CD4-positive, alpha-beta T cell (primary cell): ENCODE measurements at regions of chr3 and their contacts with region 1.

Region 1: GRCh38 chr3:123449102-123449996 is 459 bp upstream of the ADCY5 start:
- DNase-seq: peak in 1 of 14 experiments; percentile 10
- ATAC-seq: no peak
- H3K4me3 ChIP-seq: peak overlapping the region; percentile 16
- H3K4me3 Mint-ChIP-seq: no peak overlapping the region
- H3K27ac ChIP-seq: no peak overlapping the region
- H3K27ac Mint-ChIP-seq: no peak overlapping the region
- H3K4me1 ChIP-seq: peaks cover 12% of the 10 kb centered on the region
- H3K4me1 Mint-ChIP-seq: peaks cover 9% of the 10 kb centered on the region
- H3K27me3 ChIP-seq: peaks cover 32 to 54% of the 10 kb centered on the region in 2 experiments
- H3K27me3 Mint-ChIP-seq: peaks cover 62% of the 10 kb centered on the region
- CTCF ChIP-seq: no peak

Region 2: DNA sequence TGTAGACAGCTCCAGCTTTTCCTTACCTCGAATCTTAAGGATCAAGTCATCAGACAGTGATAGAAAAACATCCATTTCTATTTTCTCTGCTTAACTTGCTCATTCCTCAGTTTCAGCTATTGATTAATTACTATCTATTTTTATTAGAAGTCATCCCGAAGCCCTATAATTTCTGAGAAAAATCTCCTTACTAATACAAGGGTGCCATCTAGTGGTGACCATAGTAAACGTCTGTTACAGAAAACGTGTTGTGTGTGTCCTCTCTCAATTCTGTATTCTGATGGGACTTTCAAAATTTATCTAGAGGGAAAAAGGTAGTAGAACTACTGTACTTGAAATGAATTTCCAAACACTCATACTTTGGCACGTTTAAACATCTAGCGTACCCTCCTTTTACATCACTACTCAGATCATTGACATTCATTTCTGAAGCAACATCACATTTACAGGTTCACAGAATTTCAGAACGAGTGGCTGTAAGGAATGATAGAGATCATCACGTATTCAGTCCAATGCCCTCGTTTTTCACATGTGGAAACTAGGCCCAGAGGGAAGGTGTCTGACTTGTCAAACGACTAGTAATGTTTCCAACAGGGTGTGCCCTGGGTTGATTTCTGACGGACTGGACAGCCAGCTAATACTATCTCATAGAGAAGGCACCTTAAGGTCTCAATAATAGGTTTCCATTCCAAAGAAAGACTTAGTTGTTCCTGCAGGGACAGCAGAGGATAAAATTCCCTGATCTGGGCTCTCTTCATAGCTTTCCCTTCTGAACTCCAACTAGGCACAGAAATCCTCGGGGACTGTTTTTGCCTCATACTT is 109.9 kb after region 1 on chr3:
- CTCF ChIA-PET with region 1: no interaction called
- POLR2A ChIA-PET with region 1: no interaction called
- intact Hi-C with region 1: loop called in 1 of 2 experiments (anchors 2 kb)
- DNase-seq: peak in 4 of 14 experiments; percentile 27 to 75 (median 66)
- ATAC-seq: no peak
- H3K4me3 ChIP-seq: no peak overlapping the region
- H3K4me3 Mint-ChIP-seq: no peak overlapping the region
- H3K27ac ChIP-seq: no peak overlapping the region
- H3K27ac Mint-ChIP-seq: no peak overlapping the region
- H3K4me1 ChIP-seq: no peaks in the 10 kb centered on the region
- H3K4me1 Mint-ChIP-seq: no peaks in the 10 kb centered on the region
- H3K27me3 ChIP-seq: no peaks in the 10 kb centered on the region
- H3K27me3 Mint-ChIP-seq: no peaks in the 10 kb centered on the region
- CTCF ChIP-seq: peak; percentile 98